Gastrocnemius medialis (tissue), 4 donors: ENCODE measurements at regions of chr22 and their contacts with region 1.

Region 1: DNA sequence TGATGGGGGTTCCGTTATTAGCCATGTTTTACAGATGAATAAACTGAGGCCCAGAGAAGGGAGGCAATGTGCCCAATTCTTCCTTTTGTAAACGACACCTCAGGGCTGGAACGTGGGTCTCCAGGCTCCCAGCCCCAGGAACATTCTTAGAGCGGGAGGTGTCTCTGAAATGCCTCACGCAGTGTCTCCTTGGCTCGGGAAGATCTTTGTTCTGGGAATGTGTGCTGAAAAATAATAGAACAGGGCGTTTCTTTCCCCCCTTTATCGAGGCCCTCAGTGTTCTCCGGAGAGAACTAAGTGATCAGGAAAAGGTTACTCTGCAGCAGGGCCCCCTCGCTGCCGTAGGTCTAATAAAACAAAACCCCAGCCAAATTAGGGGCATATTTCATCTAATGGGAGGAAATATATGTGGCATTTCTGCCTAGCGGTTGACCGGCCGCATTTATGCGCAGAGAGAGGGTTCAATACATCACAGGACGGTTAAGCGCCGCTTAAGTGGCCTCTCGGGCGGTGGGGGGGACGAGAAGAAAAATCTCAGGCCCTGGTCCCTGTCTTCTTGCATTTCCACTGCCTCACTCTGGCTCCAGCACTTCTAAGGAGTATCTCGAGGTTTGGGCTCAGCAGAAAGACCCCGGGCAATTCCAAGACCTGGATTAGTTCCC is 564.3 kb downstream of the MN1 start:
- DNase-seq: no peak
- ATAC-seq: no peak
- H3K4me3 ChIP-seq: no peak overlapping the region
- H3K27ac ChIP-seq: no peak overlapping the region
- H3K4me1 ChIP-seq: peaks cover 0 to 4% of the 10 kb centered on the region in 2 donors
- H3K27me3 ChIP-seq: peaks cover 0 to 6% (median 3%) of the 10 kb centered on the region in 3 donors
- CTCF ChIP-seq: no peak
- POLR2A ChIP-seq: no peak

Region 2: DNA sequence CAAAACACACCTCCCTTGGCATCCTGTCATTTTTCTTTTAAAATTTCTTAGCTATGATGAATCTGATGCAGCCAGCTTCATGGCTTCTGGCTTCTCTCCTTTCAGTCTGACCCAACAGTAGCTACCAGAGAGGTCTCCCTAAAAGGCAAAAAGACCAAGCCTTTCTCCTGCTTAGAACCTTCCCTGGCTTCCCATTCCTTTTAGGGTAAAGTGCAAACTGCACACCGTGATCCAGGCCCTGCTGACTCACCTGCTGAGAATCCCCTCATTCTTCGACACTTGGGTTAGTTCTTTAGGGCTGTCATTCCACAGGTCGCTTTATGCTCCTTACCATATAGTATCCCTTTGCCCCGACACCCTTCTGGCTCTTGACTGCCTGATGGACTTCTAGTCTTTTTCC is 217.4 kb before region 1 on chr22:
- in situ Hi-C with region 1: no loop called
- intact Hi-C with region 1: no loop called
- DNase-seq: no peak
- ATAC-seq: no peak
- H3K4me3 ChIP-seq: no peak overlapping the region
- H3K27ac ChIP-seq: no peak overlapping the region
- H3K4me1 ChIP-seq: no peaks in the 10 kb centered on the region
- H3K27me3 ChIP-seq: peaks cover 9 to 26% (median 19%) of the 10 kb centered on the region in 3 donors
- CTCF ChIP-seq: no peak
- POLR2A ChIP-seq: no peak

Region 3: GRCh38 chr22:27063406-27063805 is 173.8 kb before region 1 on chr22:
- in situ Hi-C with region 1: no loop called
- intact Hi-C with region 1: no loop called
- DNase-seq: no peak
- ATAC-seq: no peak
- H3K4me3 ChIP-seq: no peak overlapping the region
- H3K27ac ChIP-seq: no peak overlapping the region
- H3K4me1 ChIP-seq: no peaks in the 10 kb centered on the region
- H3K27me3 ChIP-seq: peaks cover under 1 to 26% (median 17%) of the 10 kb centered on the region in 3 donors
- CTCF ChIP-seq: no peak
- POLR2A ChIP-seq: no peak

Region 4: GRCh38 chr22:27212617-27213177 is 24.5 kb before region 1 on chr22:
- in situ Hi-C with region 1: no loop called
- intact Hi-C with region 1: no loop called
- DNase-seq: peak; percentile 71 to 73
- ATAC-seq: peak; percentile 64 to 68
- H3K4me3 ChIP-seq: no peak overlapping the region
- H3K27ac ChIP-seq: peak overlapping the region; percentile 45 to 75 (median 58)
- H3K4me1 ChIP-seq: no peaks in the 10 kb centered on the region
- H3K27me3 ChIP-seq: peaks cover 0 to 7% (median 5%) of the 10 kb centered on the region in 3 donors
- CTCF ChIP-seq: no peak
- POLR2A ChIP-seq: no peak

Region 5: DNA sequence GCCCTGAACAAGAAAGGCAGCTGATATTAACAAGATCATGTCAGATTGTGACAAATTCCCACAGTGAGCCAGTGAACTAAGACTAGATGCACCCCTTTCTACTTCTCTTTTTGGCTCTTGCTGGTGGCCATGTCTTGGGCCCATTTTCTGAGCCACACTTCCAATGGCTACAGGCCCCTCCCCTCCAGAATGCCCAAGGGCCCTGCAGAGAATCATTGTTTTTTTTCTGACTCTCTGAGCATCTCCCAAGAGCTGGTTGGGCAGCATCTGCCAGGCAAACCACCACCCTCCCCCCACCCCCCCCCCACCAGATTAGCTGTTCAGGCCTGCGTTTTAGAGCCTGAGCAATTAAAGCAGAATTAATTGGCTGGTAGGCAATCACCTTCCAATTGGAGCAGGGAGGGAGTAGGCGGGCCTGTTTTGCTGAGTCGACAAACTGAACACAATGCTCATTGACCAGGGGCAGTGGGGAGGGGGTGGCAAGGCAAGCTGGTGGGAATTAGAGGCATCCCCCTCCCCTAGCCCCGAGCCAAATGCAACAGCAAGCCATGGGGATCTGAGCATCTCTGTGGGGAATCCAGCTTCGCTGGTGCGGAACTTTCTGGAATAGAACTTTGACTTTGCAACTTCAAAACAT is 23.0 kb after region 1 on chr22:
- in situ Hi-C with region 1: no loop called
- intact Hi-C with region 1: loop called (anchors 1 kb)
- DNase-seq: no peak
- ATAC-seq: no peak
- H3K4me3 ChIP-seq: no peak overlapping the region
- H3K27ac ChIP-seq: no peak overlapping the region
- H3K4me1 ChIP-seq: no peaks in the 10 kb centered on the region
- H3K27me3 ChIP-seq: no peaks in the 10 kb centered on the region
- CTCF ChIP-seq: no peak
- POLR2A ChIP-seq: no peak